Transverse colon (tissue), 4 donors: ENCODE measurements at regions of chr1 and their contacts with region 1.

Region 1: DNA sequence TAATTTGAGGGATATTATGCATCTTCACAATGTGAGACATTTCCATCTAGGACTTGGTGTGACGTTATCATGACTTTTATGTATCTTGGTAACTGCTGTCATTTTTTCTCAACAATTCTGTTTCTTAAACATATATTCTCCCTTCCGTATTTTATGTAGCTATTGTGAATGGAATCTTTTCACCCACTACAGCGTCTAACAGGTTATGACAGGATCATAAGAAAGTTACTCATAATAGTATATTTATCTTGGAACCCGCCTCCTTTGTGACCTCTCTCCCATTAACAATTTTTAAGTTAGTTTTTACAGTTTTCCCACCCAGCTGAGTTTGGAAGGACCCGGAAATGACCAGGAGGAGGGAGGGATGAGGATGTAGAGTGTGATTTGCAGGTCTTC is 6.8 kb upstream of the DMRTA2 start:
- DNase-seq: no peak
- H3K4me3 ChIP-seq: no peak overlapping the region
- H3K27ac ChIP-seq: no peak overlapping the region
- H3K4me1 ChIP-seq: peaks cover 0 to 23% (median 10%) of the 10 kb centered on the region in 4 donors
- H3K27me3 ChIP-seq: peaks cover 81% of the 10 kb centered on the region
- CTCF ChIP-seq: no peak
- EP300 ChIP-seq: no peak
- POLR2A ChIP-seq: no peak

Region 2: GRCh38 chr1:50208315-50208714 is 221.7 kb before region 1 on chr1:
- in situ Hi-C with region 1: no loop called
- intact Hi-C with region 1: no loop called
- DNase-seq: no peak
- H3K4me3 ChIP-seq: no peak overlapping the region
- H3K27ac ChIP-seq: no peak overlapping the region
- H3K4me1 ChIP-seq: no peaks in the 10 kb centered on the region
- H3K27me3 ChIP-seq: no peaks in the 10 kb centered on the region
- CTCF ChIP-seq: no peak
- EP300 ChIP-seq: no peak
- POLR2A ChIP-seq: no peak

Region 3: GRCh38 chr1:50308878-50309277 is 121.1 kb before region 1 on chr1:
- in situ Hi-C with region 1: no loop called
- intact Hi-C with region 1: no loop called
- DNase-seq: no peak
- H3K4me3 ChIP-seq: no peak overlapping the region
- H3K27ac ChIP-seq: no peak overlapping the region
- H3K4me1 ChIP-seq: no peaks in the 10 kb centered on the region
- H3K27me3 ChIP-seq: no peaks in the 10 kb centered on the region
- CTCF ChIP-seq: no peak
- EP300 ChIP-seq: no peak
- POLR2A ChIP-seq: no peak

Region 4: DNA sequence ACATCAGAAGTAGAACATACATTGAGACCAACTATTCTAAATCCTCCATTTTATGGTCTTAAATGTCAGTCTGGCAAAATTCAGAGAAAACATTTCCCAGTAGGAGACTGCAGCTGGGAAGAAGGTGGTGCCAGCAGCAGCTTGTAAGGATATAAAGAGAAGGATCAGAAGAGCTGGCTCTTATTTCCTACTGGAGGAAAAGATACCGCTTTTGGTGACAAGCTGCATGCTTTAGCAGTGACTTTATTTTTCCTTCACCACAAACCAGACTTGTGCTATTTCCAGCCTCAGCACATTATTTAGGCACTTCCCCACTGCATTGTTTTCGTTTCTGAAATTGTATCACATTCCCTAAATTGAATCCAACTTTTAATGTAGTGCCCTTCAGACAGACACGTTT is 834.4 kb after region 1 on chr1:
- in situ Hi-C with region 1: no loop called
- intact Hi-C with region 1: loop called (anchors 5 kb)
- DNase-seq: no peak
- H3K4me3 ChIP-seq: no peak overlapping the region
- H3K27ac ChIP-seq: peak overlapping the region in 3 of 4 donors; percentile 31 to 54 (median 36)
- H3K4me1 ChIP-seq: peaks cover 0 to 43% (median 17%) of the 10 kb centered on the region in 4 donors
- H3K27me3 ChIP-seq: no peaks in the 10 kb centered on the region
- CTCF ChIP-seq: no peak
- EP300 ChIP-seq: no peak
- POLR2A ChIP-seq: no peak